H1 (cell line): ENCODE measurements at regions of chr1 and their contacts with region 1.

Region 1: GRCh38 chr1:182003953-182004586 is 57.4 kb downstream of the ZNF648 start:
- DNase-seq: no peak
- H3K4me3 ChIP-seq: no peak overlapping the region
- H3K27ac ChIP-seq: no peak overlapping the region
- H3K4me1 ChIP-seq: peaks cover 0 to 4% (median 2%) of the 10 kb centered on the region in 4 experiments; a peak in 3 of 7 replicates
- H3K27me3 ChIP-seq: no peaks in the 10 kb centered on the region
- CTCF ChIP-seq: peak; percentile 7 to 51 (median 37); a peak in 2 of 4 replicates
- EP300 ChIP-seq: no peak
- POLR2A ChIP-seq: no peak
- RAD21 ChIP-seq: peak; percentile 13 to 36; a peak in 3 of 4 replicates

Region 2: DNA sequence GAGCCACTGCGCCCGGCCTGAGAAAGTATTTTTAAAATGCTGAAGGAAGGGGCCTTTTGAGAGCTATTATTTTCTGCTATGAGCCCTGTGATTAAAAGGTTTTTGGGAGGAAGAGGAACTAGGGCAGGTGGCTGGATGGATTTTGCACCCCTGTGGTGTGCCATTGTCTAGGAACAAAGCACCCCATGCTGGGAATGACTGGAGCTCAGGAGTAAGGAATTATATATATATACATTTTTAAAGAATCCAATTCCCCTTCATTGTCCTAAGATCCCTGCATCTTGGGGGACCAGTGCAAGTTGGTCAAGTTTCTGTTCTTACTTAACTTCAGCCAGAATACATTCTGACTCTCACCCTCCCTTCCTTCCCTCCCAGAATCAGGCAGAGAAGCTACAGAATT is 34.2 kb before region 1 on chr1:
- CTCF ChIA-PET with region 1: interaction called, 18 read pairs
- POLR2A ChIA-PET with region 1: interaction called, 3 read pairs
- DNase-seq: peak; percentile 85 to 87
- H3K4me3 ChIP-seq: peak overlapping the region in 1 of 4 experiments; percentile 39; a peak in 1 of 8 replicates
- H3K27ac ChIP-seq: peak overlapping the region; percentile 85; the same call in 1 of the 2 replicates
- H3K4me1 ChIP-seq: peaks cover 0 to 17% (median 5%) of the 10 kb centered on the region in 4 experiments; a peak in 4 of 7 replicates
- H3K27me3 ChIP-seq: no peaks in the 10 kb centered on the region
- CTCF ChIP-seq: no peak
- EP300 ChIP-seq: peak in 1 of 2 experiments; percentile 94; a peak in 1 of 3 replicates
- POLR2A ChIP-seq: no peak
- RAD21 ChIP-seq: no peak

Region 3: DNA sequence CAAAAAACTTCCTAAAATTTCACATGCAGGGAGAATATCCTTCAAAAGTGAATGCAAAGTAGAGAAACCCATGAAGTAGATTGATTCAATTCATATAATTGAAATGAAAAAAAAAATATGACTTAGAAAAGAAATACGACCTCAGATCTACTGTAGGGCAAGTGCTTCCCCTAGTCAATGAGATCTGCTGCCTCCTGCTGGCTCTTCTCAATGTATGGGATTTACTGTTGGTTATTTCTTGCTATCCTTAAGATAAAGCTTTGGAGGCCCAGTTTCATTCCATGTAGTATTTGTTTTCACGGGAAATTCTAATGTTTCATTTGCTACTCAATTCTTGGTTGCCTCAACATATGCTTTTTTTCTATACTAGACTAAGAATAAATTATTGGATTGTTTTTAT is 11.3 kb after region 1 on chr1:
- CTCF ChIA-PET with region 1: interaction called, 38 read pairs
- POLR2A ChIA-PET with region 1: no interaction called
- DNase-seq: no peak
- H3K4me3 ChIP-seq: no peak overlapping the region
- H3K27ac ChIP-seq: no peak overlapping the region
- H3K4me1 ChIP-seq: no peaks in the 10 kb centered on the region
- H3K27me3 ChIP-seq: no peaks in the 10 kb centered on the region
- CTCF ChIP-seq: peak in 2 of 3 experiments; percentile 24 to 52; a peak in 2 of 4 replicates
- EP300 ChIP-seq: no peak
- POLR2A ChIP-seq: no peak
- RAD21 ChIP-seq: peak; percentile 41 to 58

Region 4: GRCh38 chr1:182520736-182521135 is 516.7 kb after region 1 on chr1:
- CTCF ChIA-PET with region 1: no interaction called
- POLR2A ChIA-PET with region 1: no interaction called
- DNase-seq: no peak
- H3K4me3 ChIP-seq: no peak overlapping the region
- H3K27ac ChIP-seq: no peak overlapping the region
- H3K4me1 ChIP-seq: no peaks in the 10 kb centered on the region
- H3K27me3 ChIP-seq: no peaks in the 10 kb centered on the region
- CTCF ChIP-seq: no peak
- EP300 ChIP-seq: no peak
- POLR2A ChIP-seq: no peak
- RAD21 ChIP-seq: no peak